ENCODE measurements at regions of chr5 and their contacts with region 1.

Region 1: DNA sequence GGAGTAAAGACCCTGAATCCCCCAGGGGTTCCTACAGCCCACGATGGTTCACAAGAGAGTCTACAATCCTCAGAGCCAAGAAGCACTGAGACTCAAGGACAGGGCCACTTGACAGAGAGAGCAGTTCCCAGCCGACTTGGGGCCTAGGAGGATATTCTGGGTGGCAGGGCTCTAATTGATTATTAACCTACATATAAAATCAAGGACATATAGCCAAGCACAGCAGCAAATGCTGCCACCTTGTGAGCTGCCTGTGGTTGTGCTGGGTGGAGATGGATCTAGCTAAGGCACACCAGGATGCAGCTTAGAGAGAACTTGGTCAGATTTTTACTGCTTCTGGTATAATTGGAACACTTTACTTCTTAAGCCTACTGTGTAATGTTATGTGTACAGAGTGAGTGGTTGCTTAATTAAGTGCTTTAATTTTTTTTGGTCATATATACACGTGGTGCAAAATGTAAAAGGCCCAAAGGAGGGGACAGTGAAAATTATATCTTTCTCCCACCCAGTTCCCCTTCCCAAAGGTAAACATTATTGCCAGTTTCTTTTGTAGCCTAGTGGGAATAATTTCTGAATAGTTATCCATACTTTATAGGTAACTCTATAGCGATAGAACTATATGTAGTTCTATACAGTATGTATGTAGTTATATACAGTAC is 78.8 kb downstream of the F2RL2 start:
- DNase-seq: peak; percentile 25 to 80 (median 53)
- ATAC-seq: peak; percentile 10
- H3K4me3 ChIP-seq: peak overlapping the region in 1 of 2 experiments; percentile 2
- H3K4me3 Mint-ChIP-seq: peak overlapping the region; percentile 77
- H3K27ac ChIP-seq: peak overlapping the region; percentile 77 to 91
- H3K27ac Mint-ChIP-seq: peak overlapping the region; percentile 97
- H3K4me1 ChIP-seq: peaks cover 68% of the 10 kb centered on the region
- H3K4me1 Mint-ChIP-seq: peaks cover 87% of the 10 kb centered on the region
- H3K27me3 ChIP-seq: no peaks in the 10 kb centered on the region
- H3K27me3 Mint-ChIP-seq: no peaks in the 10 kb centered on the region
- CTCF ChIP-seq: peak; percentile 66

Region 2: DNA sequence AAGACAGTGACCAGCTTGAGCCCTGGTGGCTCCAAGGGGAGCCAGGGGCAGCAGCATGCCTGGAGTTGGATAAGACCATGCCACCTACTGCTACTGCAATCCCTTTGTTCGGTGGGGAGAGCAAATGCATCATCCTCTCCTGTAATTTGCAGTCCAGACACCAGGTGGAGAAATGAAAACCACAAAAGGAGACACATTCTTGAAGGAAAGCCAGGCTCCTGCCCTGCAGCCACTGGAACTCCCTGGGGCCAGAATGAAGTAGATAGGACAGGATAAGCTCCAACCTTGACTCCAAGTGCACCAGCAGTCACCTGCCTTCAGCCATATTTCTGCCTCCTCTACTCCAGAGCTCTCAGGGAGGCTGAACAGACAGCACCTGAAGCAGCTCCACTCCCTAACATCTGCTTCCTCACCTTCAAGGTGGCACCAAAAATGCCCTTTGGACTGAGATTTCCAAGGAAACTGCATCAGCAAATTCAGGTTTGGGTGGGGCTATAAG is 206.4 kb before region 1 on chr5:
- CTCF ChIA-PET with region 1: interaction called, 8 read pairs
- POLR2A ChIA-PET with region 1: no interaction called
- intact Hi-C with region 1: loop called (anchors 1 kb)
- DNase-seq: peak in 8 of 9 experiments; percentile 14 to 77 (median 40)
- ATAC-seq: peak; percentile 84
- H3K4me3 ChIP-seq: no peak overlapping the region
- H3K4me3 Mint-ChIP-seq: no peak overlapping the region
- H3K27ac ChIP-seq: no peak overlapping the region
- H3K27ac Mint-ChIP-seq: no peak overlapping the region
- H3K4me1 ChIP-seq: peaks cover 20% of the 10 kb centered on the region
- H3K4me1 Mint-ChIP-seq: peaks cover 28% of the 10 kb centered on the region
- H3K27me3 ChIP-seq: no peaks in the 10 kb centered on the region
- H3K27me3 Mint-ChIP-seq: no peaks in the 10 kb centered on the region
- CTCF ChIP-seq: peak; percentile 35

Region 3: GRCh38 chr5:76473661-76474060 is 70.7 kb before region 1 on chr5:
- CTCF ChIA-PET with region 1: interaction called, 11 read pairs
- POLR2A ChIA-PET with region 1: interaction called, 9 read pairs
- intact Hi-C with region 1: loop called (anchors 2 to 5 kb)
- DNase-seq: peak; percentile 38 to 90 (median 70)
- ATAC-seq: peak; percentile 96
- H3K4me3 ChIP-seq: no peak overlapping the region
- H3K4me3 Mint-ChIP-seq: peak overlapping the region; percentile 35
- H3K27ac ChIP-seq: peak overlapping the region; percentile 18 to 65
- H3K27ac Mint-ChIP-seq: peak overlapping the region; percentile 88
- H3K4me1 ChIP-seq: peaks cover 49% of the 10 kb centered on the region
- H3K4me1 Mint-ChIP-seq: peaks cover 75% of the 10 kb centered on the region
- H3K27me3 ChIP-seq: no peaks in the 10 kb centered on the region
- H3K27me3 Mint-ChIP-seq: no peaks in the 10 kb centered on the region
- CTCF ChIP-seq: no peak

Region 4: DNA sequence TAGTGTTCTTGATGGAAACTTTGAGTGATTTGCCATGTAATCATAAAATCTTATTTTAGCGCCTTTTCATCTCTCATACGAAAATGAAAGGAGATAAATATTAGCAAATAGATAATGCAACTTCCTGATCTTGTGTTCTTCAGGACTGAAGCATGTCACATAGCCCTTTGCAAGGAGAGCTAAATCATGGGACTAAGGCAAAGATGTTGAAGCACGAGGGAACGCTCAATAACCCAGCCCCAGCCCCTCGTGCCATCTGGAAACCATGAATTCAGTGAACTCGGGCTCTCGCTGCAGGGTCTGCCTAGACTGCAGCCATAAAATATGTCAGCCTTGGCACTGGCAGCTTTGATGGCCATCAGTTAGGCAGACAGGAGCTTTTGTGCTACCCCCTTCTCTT is 20.6 kb after region 1 on chr5:
- CTCF ChIA-PET with region 1: no interaction called
- POLR2A ChIA-PET with region 1: no interaction called
- intact Hi-C with region 1: no loop called
- DNase-seq: no peak
- ATAC-seq: no peak
- H3K4me3 ChIP-seq: no peak overlapping the region
- H3K4me3 Mint-ChIP-seq: no peak overlapping the region
- H3K27ac ChIP-seq: no peak overlapping the region
- H3K27ac Mint-ChIP-seq: no peak overlapping the region
- H3K4me1 ChIP-seq: no peaks in the 10 kb centered on the region
- H3K4me1 Mint-ChIP-seq: peaks cover 24% of the 10 kb centered on the region
- H3K27me3 ChIP-seq: no peaks in the 10 kb centered on the region
- H3K27me3 Mint-ChIP-seq: no peaks in the 10 kb centered on the region
- CTCF ChIP-seq: no peak